ENCODE measurements at regions of chr6 and their contacts with region 1.

Region 1: DNA sequence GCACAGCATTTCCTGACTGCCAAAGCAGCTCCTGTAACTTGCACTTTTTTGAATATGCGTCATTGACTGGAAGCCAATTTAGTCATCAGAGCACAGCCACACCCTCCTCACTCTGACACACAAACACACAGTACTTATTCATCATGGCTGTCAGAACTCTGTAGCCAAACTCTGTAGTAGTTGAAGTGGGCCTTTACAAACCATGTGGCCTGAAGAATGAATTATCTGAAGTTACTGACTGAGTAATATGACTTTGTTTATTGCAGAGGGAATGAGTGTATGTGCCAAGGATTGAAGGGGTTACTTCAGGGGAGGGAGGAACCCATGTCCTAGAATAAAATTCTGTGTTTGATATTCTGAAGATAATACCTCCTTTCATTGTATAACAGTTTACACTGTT is 102.7 kb downstream of the FIG4 start:
- DNase-seq: no peak
- H3K4me3 ChIP-seq: no peak overlapping the region
- H3K27ac ChIP-seq: peak overlapping the region in 36 of 59 donors; percentile 4 to 76 (median 40)
- H3K27me3 ChIP-seq: no peaks in the 10 kb centered on the region
- CTCF ChIP-seq: peak in 1 of 56 donors; percentile 9

Region 2: DNA sequence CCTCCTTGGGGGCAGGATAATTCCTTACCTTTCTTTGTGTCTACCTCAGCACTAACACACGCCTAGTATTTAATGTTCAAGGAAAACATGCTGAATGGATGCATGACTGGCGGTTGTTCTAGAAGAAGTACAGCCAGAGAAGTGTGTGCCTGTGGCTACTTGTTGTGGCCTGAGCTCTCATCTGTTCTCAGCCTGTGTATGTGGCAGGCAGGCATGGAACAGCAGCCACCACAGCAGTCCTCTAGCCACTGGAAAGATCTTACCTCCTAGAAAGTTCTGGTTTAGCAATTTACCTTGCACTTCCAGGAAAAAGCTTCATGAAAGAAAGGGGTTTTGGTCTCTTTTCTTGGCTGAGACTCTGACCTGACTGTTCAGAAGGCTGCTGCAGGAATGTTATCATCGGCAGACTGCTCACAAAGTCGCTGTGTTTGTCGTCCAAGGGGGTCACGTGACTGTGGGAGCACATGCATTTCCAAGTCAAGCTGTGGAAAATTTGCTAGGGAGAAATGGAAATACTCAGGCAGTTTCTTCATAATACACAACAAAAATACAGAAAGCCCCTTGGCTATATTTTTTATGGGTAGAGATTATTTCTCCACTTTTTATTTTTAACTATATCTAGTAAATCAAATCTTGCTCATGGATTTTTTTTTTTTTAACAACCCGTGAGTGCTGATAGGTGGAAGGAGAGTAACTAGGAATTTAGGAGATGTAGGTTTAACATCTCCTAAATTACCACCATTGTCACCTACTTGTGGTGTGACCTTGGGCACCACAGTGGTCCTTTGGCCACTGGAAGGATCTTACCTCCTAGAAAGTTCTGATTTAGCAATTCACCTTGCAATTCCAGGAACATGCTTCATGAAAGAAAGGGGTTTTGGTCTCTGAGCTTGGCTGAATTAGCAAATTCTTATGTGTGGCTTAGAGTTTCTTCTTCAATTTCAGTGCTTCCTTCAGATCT is 73.5 kb after region 1 on chr6:
- intact Hi-C with region 1: loop called in 1 of 2 experiments (anchors 5 kb)
- DNase-seq: peak; percentile 76 to 93 (median 84)
- H3K4me3 ChIP-seq: peak overlapping the region in 4 of 59 donors; percentile 0 to 29 (median 19)
- H3K27ac ChIP-seq: peak overlapping the region in 53 of 59 donors; percentile 4 to 92 (median 74)
- H3K27me3 ChIP-seq: no peaks in the 10 kb centered on the region
- CTCF ChIP-seq: peak in 7 of 56 donors; percentile 8 to 37 (median 21)

Region 3: DNA sequence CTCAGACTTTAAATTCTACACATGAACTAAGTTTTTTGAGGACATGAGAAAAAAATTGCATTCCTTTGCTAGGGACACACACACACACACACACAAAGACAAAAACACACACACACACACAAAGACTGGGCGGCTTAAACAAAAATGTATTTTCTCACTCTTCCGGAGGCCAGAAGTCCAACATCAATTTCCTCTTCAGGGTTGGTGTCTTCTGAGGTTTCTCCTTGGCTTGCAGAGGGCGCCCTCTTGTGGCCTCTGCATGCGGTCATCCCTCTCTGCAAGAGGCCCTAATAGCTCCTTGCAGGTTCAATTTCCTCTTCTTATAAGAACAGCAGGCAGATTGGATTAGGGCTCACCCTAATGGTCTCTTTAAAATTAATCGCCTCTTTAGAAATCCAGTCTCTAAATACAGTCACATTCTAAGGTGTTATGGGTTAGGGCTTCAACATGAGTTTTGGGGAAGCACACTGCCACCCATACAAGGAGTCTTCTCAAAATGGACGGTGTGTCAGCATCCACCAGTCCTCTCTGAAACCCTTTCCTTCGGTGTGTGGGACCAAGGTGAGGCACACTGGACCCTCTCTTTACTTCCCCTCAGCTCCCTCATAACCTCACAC is 245.7 kb after region 1 on chr6:
- intact Hi-C with region 1: loop called in 1 of 2 experiments (anchors 10 kb)
- DNase-seq: peak; percentile 81 to 92 (median 86)
- H3K4me3 ChIP-seq: peak overlapping the region in 40 of 59 donors; percentile 2 to 53 (median 26)
- H3K27ac ChIP-seq: peak overlapping the region in 39 of 59 donors; percentile 3 to 80 (median 56)
- H3K27me3 ChIP-seq: no peaks in the 10 kb centered on the region
- CTCF ChIP-seq: peak; percentile 67 to 96 (median 90)

Measured in dorsolateral prefrontal cortex (tissue), 120 donors.